Gastrocnemius medialis (tissue), 4 donors: ENCODE measurements at regions of chr12 and their contacts with region 1.

Region 1: GRCh38 chr12:99195474-99195873 is 452.1 kb upstream of the GARIN6 start:
- DNase-seq: no peak
- ATAC-seq: no peak
- H3K4me3 ChIP-seq: no peak overlapping the region
- H3K27ac ChIP-seq: no peak overlapping the region
- H3K4me1 ChIP-seq: no peaks in the 10 kb centered on the region
- H3K27me3 ChIP-seq: no peaks in the 10 kb centered on the region
- CTCF ChIP-seq: no peak
- POLR2A ChIP-seq: no peak

Region 2: GRCh38 chr12:99087278-99087677 is 108.2 kb before region 1 on chr12:
- in situ Hi-C with region 1: loop called in 1 of 4 experiments (anchors 25 kb)
- intact Hi-C with region 1: no loop called
- DNase-seq: no peak
- ATAC-seq: no peak
- H3K4me3 ChIP-seq: no peak overlapping the region
- H3K27ac ChIP-seq: no peak overlapping the region
- H3K4me1 ChIP-seq: no peaks in the 10 kb centered on the region
- H3K27me3 ChIP-seq: no peaks in the 10 kb centered on the region
- CTCF ChIP-seq: no peak
- POLR2A ChIP-seq: no peak

Region 3: GRCh38 chr12:99121521-99121920 is 74.0 kb before region 1 on chr12:
- in situ Hi-C with region 1: no loop called
- intact Hi-C with region 1: loop called (anchors 2 kb)
- DNase-seq: no peak
- ATAC-seq: no peak
- H3K4me3 ChIP-seq: no peak overlapping the region
- H3K27ac ChIP-seq: no peak overlapping the region
- H3K4me1 ChIP-seq: no peaks in the 10 kb centered on the region
- H3K27me3 ChIP-seq: no peaks in the 10 kb centered on the region
- CTCF ChIP-seq: no peak
- POLR2A ChIP-seq: no peak